Ovary (tissue), 10 donors: ENCODE measurements at regions of chr1 and their contacts with region 1.

Region 1: GRCh38 chr1:197521118-197521739 is 253.2 kb downstream of the CRB1 start:
- DNase-seq: no peak
- H3K4me3 ChIP-seq: no peak overlapping the region
- H3K27ac ChIP-seq: no peak overlapping the region
- H3K4me1 ChIP-seq: no peaks in the 10 kb centered on the region
- H3K27me3 ChIP-seq: no peaks in the 10 kb centered on the region
- CTCF ChIP-seq: peak in 2 of 3 donors; percentile 23 to 31
- EP300 ChIP-seq: no peak
- POLR2A ChIP-seq: no peak

Region 2: DNA sequence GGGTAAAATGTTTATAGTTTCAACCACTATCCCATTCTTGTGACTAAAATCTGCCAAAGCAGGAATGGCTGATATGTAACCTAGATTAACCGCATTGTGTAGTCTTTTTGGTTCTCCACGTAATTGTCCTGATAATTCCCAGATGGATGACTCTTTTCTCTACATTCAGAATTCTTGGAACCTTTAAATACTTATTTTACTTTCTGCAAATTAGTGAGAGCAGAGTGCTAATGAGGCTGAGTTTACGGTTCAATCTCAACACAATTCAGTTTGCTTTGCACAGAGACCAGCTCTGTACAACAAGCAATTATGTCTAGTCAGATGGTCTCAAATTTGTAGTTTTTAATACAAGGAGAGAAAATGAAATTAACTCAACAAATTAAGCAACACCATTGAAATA is 244.1 kb before region 1 on chr1:
- intact Hi-C with region 1: no loop called
- DNase-seq: no peak
- H3K4me3 ChIP-seq: no peak overlapping the region
- H3K27ac ChIP-seq: no peak overlapping the region
- H3K4me1 ChIP-seq: no peaks in the 10 kb centered on the region
- H3K27me3 ChIP-seq: no peaks in the 10 kb centered on the region
- CTCF ChIP-seq: no peak
- EP300 ChIP-seq: no peak
- POLR2A ChIP-seq: no peak

Region 3: DNA sequence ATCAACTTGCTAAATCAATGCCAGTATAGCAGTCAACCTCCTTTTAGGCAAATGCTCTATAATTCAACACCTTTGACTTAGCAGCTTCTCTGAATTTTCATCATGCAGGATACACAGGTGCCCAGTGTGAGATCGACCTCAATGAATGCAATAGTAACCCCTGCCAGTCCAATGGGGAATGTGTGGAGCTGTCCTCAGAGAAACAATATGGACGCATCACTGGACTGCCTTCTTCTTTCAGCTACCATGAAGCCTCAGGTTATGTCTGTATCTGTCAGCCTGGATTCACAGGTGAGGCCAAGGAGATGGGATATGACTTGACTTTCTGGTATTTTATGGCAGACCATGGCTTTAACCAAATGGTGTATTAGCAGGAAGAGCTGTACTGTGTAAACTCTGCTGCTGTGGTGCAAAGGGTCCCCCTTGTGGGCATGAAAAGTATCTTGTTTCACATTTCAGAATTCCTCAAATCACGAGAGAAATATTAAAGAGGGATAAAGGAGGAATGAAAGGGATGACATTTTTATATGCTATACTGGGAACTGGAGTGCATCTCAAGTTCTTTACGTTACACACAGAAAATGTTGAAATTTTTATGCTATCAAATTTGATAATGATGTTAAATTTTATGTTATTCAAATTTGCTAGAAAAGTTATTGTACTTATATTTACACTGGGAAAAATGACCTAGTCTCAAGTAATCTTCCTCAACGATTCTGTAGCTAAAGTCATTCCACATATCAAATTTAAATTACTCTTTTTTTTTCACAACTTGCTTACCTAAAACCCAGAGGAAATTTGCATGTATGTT is 164.3 kb before region 1 on chr1:
- intact Hi-C with region 1: no loop called
- DNase-seq: peak in 2 of 5 donors; percentile 23 to 51
- H3K4me3 ChIP-seq: no peak overlapping the region
- H3K27ac ChIP-seq: no peak overlapping the region
- H3K4me1 ChIP-seq: peaks cover 3% of the 10 kb centered on the region
- H3K27me3 ChIP-seq: no peaks in the 10 kb centered on the region
- CTCF ChIP-seq: peak; percentile 8 to 37 (median 35)
- EP300 ChIP-seq: no peak
- POLR2A ChIP-seq: no peak

Region 4: DNA sequence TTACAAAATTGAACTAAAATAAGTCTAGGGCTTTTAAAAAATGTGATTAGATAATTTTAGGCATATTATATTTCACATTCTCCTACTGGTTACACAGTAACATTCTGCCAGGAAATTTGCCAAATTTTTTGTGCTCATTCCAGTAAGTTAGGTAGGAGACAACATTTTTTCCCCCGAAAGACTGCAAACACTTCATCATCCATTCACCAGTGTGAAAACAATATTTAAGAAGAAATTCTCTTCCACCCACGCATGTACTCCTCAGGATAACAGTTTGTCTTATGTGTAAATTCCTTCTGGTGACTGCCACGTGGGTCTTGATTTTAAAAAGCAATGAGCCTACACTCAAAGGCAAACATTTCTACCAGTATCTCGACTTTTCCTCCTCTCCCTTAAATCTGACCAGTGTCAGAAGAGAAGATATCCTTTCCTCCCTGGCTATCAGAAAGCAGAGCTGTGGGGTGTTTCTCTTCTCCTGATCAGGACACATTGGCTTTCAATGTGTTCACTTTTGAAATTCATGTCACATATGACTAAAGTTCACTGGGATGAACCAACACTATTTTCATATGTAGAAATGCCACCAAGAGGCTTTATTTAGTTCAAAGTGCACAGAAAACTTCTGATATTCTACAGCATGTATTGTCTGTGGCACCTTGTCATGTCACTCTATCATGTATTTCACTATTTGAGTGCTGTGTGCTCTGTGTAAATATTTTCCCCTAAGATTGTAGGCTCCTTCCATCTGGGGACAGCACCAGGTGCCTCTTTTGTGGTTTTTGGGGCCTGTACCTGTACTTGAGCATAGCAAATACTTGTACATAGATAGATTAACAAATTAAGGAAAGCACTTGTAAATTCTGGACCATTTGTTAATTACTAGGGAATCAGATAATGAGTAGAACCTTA is 434.5 kb after region 1 on chr1:
- intact Hi-C with region 1: no loop called
- DNase-seq: no peak
- H3K4me3 ChIP-seq: no peak overlapping the region
- H3K27ac ChIP-seq: no peak overlapping the region
- H3K4me1 ChIP-seq: peaks cover 6% of the 10 kb centered on the region
- H3K27me3 ChIP-seq: no peaks in the 10 kb centered on the region
- CTCF ChIP-seq: no peak
- EP300 ChIP-seq: no peak
- POLR2A ChIP-seq: no peak

Region 5: DNA sequence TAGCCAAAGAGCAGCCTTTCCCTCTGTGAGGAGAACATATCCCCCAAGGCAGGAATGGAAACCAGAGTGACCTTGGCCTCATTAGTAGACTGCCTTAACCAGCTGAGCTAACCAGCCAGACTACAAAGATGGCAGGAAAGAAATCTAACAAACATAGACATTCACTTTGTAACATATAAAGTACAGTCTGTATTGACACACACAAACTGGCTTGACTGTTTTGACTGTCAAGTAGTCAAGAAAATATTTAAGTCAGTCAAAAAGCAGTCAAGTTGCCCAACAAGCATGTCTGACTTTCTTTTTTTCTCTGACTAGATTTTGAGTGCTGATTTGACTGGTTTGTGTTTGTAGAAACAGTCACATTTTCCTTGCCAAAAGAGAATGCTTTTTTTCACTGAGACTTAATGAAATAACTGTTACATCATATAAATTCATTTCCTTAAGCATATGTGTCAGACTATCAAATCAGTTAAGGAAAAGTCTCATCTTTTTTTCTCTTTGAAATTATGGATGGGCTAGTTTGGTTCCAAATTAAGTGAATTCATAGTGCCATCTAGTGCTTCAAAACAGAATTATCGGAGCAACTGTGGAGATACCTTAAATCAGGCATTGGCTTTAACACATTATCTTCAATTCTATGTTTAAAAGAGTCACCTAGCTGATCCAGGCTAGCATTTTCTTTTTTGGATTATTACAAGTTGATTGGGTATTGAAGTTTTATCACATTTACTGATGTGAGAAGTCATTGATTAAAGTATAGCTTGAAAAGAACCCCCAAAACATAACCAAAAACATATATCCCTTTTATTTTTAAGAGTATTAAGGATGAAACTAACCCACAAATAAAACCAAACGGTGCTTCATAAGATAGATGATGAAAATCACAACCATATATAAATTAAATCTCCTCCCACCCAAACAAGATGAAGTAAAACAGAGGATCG is 944.2 kb after region 1 on chr1:
- intact Hi-C with region 1: loop called in 1 of 4 experiments (anchors 10 kb)
- DNase-seq: no peak
- H3K4me3 ChIP-seq: no peak overlapping the region
- H3K27ac ChIP-seq: no peak overlapping the region
- H3K4me1 ChIP-seq: no peaks in the 10 kb centered on the region
- H3K27me3 ChIP-seq: no peaks in the 10 kb centered on the region
- CTCF ChIP-seq: peak in 2 of 3 donors; percentile 33 to 45
- EP300 ChIP-seq: no peak
- POLR2A ChIP-seq: no peak